Naive thymus-derived CD4-positive, alpha-beta T cell (primary cell): ENCODE measurements at regions of chr1 and their contacts with region 1.

Region 1: DNA sequence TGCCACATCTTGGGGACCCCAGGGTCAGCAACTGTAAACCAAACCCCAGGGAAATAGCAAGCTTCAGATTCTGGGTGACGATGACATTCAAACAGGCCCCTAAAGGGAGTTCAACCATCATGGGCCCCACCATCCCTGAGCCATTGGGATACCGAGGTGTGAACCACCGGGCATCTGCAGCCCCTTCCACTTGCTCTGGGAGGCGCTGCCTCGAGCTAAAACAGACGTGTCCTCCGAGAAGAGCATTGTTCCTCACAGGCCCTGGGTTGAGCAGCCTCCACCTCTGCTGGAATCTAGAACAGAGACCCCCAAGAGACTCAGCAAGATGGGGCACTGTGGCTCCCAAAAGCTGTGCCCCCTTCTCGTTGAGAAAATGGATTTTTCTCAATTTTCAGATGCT is 19.0 kb upstream of the EFHD2 start:
- DNase-seq: no peak
- ATAC-seq: no peak
- H3K4me3 ChIP-seq: no peak overlapping the region
- H3K4me3 Mint-ChIP-seq: no peak overlapping the region
- H3K27ac ChIP-seq: no peak overlapping the region
- H3K27ac Mint-ChIP-seq: no peak overlapping the region
- H3K4me1 ChIP-seq: no peaks in the 10 kb centered on the region
- H3K4me1 Mint-ChIP-seq: peaks cover 0 to 13% (median 4%) of the 10 kb centered on the region in 7 donors
- H3K27me3 ChIP-seq: no peaks in the 10 kb centered on the region
- H3K27me3 Mint-ChIP-seq: peaks cover 0 to 34% (median 11%) of the 10 kb centered on the region in 5 donors

Region 2: DNA sequence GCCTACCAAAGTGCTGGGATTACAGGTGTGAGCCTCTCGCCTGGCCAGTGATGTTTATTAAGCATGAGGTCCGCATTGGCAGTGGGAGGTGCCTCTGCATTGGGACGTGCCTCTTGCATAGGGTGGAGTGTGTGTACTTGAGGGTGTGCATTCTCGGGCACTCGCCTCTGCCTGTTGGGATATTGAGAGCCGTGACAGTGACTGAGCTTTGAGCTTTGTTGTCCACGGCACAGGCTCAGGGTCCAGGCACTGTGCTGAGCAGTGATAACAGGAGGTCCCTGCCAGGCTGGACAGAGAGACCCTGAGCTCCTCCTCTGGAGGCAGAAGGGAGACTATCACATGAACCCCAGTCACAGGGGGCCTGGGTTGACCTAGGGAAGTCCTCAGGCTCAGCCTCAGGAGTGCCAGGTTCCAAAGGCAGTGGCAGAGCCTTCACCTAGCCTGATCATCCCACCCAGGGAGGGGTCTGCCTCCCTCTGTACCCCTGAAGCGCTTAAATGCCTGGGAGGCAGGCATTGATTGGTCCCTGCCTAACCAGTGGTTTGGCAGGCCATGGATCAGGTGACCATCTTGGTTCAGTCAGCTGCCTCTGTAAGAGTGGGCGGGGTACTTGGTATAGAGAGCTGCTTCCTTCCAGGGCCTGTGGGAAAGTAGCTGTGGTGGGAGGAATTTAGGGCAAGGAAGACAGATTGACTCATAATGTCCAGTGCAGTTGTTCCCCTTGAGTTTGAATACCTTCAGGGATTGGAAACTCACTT is 451.0 kb before region 1 on chr1:
- CTCF ChIA-PET with region 1: no interaction called
- POLR2A ChIA-PET with region 1: no interaction called
- intact Hi-C with region 1: no loop called
- DNase-seq: no peak
- ATAC-seq: no peak
- H3K4me3 ChIP-seq: no peak overlapping the region
- H3K4me3 Mint-ChIP-seq: no peak overlapping the region
- H3K27ac ChIP-seq: no peak overlapping the region
- H3K27ac Mint-ChIP-seq: no peak overlapping the region
- H3K4me1 ChIP-seq: no peaks in the 10 kb centered on the region
- H3K4me1 Mint-ChIP-seq: no peaks in the 10 kb centered on the region
- H3K27me3 ChIP-seq: no peaks in the 10 kb centered on the region
- H3K27me3 Mint-ChIP-seq: peaks cover 0 to 8% (median 0%) of the 10 kb centered on the region in 5 donors

Region 3: DNA sequence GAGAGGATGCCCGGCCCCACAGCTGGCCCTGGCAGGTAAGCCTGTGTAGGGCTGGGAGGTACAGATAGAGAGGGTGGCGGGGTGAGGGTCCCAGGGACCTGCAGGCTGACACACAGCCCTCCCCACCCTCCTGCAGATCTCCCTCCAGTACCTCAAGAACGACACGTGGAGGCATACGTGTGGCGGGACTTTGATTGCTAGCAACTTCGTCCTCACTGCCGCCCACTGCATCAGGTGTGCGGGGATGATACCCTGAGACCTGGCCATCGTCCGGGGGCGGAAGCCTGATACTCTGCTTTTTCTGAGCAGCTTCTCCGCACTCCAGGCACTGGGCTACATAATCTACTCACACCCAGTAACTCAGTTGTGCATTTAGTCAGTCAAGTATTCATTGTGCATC is 49.7 kb after region 1 on chr1:
- CTCF ChIA-PET with region 1: interaction called, 10 read pairs
- POLR2A ChIA-PET with region 1: no interaction called
- intact Hi-C with region 1: loop called in 1 of 2 experiments (anchors 10 kb)
- DNase-seq: no peak
- ATAC-seq: no peak
- H3K4me3 ChIP-seq: no peak overlapping the region
- H3K4me3 Mint-ChIP-seq: no peak overlapping the region
- H3K27ac ChIP-seq: no peak overlapping the region
- H3K27ac Mint-ChIP-seq: no peak overlapping the region
- H3K4me1 ChIP-seq: no peaks in the 10 kb centered on the region
- H3K4me1 Mint-ChIP-seq: peaks cover 0 to 4% (median 0%) of the 10 kb centered on the region in 7 donors
- H3K27me3 ChIP-seq: no peaks in the 10 kb centered on the region
- H3K27me3 Mint-ChIP-seq: peaks cover 0 to 11% (median 0%) of the 10 kb centered on the region in 5 donors

Region 4: DNA sequence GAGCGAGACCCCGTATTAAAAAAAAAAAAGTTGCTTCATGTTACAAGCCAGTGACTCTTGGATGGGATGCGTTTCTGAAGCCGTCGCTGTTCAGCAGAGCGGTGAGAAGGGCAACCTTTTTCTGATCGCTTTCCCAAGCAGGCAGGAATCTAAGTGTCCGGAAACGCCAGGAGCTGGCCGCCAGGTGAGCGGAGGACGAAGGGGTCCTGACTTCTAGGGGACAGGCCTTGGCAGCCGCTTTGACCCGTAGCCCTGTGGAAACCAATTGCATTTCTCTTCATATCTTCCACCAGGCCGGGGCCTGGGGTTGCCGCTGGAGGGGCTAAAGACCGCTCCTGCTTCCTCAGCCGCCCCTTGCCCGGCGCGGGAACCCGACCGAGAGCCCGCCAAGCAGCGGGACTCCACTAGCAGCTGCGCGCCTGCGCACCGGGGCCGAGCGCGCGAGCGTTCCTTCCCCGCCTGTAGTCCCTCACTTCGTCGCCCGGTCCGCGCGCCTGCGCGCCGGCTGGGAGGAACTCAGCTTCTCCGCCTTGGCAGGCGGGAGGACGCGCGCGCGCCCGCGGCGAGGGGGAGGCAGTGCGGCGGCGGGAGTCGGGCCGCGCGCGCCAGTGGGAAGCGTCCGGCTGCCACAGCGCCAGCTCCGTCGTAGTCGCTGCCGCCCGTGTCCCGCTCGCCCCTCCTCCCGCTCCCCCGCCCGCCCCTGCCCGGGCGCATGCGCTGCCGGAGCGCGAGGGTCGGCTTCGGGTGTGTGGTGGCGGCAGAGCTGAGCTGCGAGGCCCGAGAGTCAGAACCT is 456.6 kb after region 1 on chr1 and contains the start of gene SPEN:
- CTCF ChIA-PET with region 1: no interaction called
- POLR2A ChIA-PET with region 1: no interaction called
- intact Hi-C with region 1: no loop called
- DNase-seq: peak; percentile 97 to 99 (median 99)
- ATAC-seq: peak; percentile 91
- H3K4me3 ChIP-seq: peak within 1 kb of the TSS; percentile 74
- H3K4me3 Mint-ChIP-seq: peak within 1 kb of the TSS; percentile 93 to 99 (median 98)
- H3K27ac ChIP-seq: peak within 1 kb of the TSS; percentile 90
- H3K27ac Mint-ChIP-seq: peak within 1 kb of the TSS; percentile 93 to 98 (median 97)
- H3K4me1 ChIP-seq: peaks cover 20 to 26% of the 10 kb centered on the region in 2 donors
- H3K4me1 Mint-ChIP-seq: peaks cover 21 to 64% (median 44%) of the 10 kb centered on the region in 7 donors
- H3K27me3 ChIP-seq: no peaks in the 10 kb centered on the region
- H3K27me3 Mint-ChIP-seq: no peaks in the 10 kb centered on the region
- total RNA-seq, gene SPEN: 72.1 to 92.1 (median 82.9) TPM